ENCODE measurements at regions of chr7 and their contacts with region 1.

Region 1: GRCh38 chr7:112898432-112899290 is 108.5 kb upstream of the TMEM168 start:
- DNase-seq: peak; percentile 71
- H3K4me3 ChIP-seq: no peak overlapping the region
- H3K27ac ChIP-seq: no peak overlapping the region
- H3K4me1 ChIP-seq: no peaks in the 10 kb centered on the region
- H3K27me3 ChIP-seq: no peaks in the 10 kb centered on the region
- CTCF ChIP-seq: peak; percentile 75

Region 2: GRCh38 chr7:112550468-112551060 is 348.1 kb before region 1 on chr7:
- intact Hi-C with region 1: loop called (anchors 5 kb)
- DNase-seq: peak; percentile 55
- H3K4me3 ChIP-seq: no peak overlapping the region
- H3K27ac ChIP-seq: no peak overlapping the region
- H3K4me1 ChIP-seq: no peaks in the 10 kb centered on the region
- H3K27me3 ChIP-seq: no peaks in the 10 kb centered on the region
- CTCF ChIP-seq: peak; percentile 98

Region 3: DNA sequence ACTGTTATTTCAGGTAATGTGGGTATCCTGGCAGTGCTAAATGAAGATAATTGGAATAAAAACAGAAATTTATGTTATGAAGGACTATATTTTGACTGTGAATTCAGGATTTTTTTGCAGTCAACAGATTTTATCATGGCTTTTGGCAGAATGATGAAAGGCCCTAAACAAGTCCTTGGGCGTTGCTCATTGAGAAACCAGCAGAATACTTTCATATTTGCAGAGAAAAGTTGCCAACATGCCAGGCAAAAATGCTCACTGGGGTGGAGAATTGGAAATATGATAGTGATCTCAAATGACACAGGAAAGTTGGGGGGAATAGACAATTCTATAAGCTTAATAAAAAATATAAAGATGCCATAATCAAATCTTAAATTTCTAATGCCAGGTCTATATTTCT is 66.9 kb after region 1 on chr7:
- intact Hi-C with region 1: no loop called
- DNase-seq: no peak
- H3K4me3 ChIP-seq: no peak overlapping the region
- H3K27ac ChIP-seq: no peak overlapping the region
- H3K4me1 ChIP-seq: no peaks in the 10 kb centered on the region
- H3K27me3 ChIP-seq: no peaks in the 10 kb centered on the region
- CTCF ChIP-seq: no peak